Gastrocnemius medialis (tissue), 4 donors: ENCODE measurements at regions of chr19 and their contacts with region 1.

Region 1: GRCh38 chr19:12365236-12366162 is at the start of gene ZNF442:
- DNase-seq: peak; percentile 95 to 96
- ATAC-seq: peak; percentile 98 to 99
- H3K4me3 ChIP-seq: peak within 1 kb of the TSS; percentile 76 to 93 (median 84)
- H3K27ac ChIP-seq: peak within 1 kb of the TSS; percentile 86 to 97 (median 92)
- H3K4me1 ChIP-seq: peaks cover 6 to 11% of the 10 kb centered on the region in 2 donors
- H3K27me3 ChIP-seq: no peaks in the 10 kb centered on the region
- CTCF ChIP-seq: peak; percentile 49 to 75 (median 58)
- POLR2A ChIP-seq: peak; percentile 81 to 87
- total RNA-seq, gene ZNF442: 0.22 to 0.66 (median 0.42) TPM

Region 2: GRCh38 chr19:12035220-12036153 is 330.0 kb before region 1 on chr19 and contains the start of gene ZNF433:
- in situ Hi-C with region 1: no loop called
- intact Hi-C with region 1: loop called (anchors 10 kb)
- DNase-seq: peak; percentile 84 to 86
- ATAC-seq: peak; percentile 99
- H3K4me3 ChIP-seq: peak within 1 kb of the TSS; percentile 86 to 95 (median 90)
- H3K27ac ChIP-seq: peak within 1 kb of the TSS; percentile 87 to 92 (median 90)
- H3K4me1 ChIP-seq: peaks cover 8 to 10% of the 10 kb centered on the region in 2 donors
- H3K27me3 ChIP-seq: no peaks in the 10 kb centered on the region
- CTCF ChIP-seq: no peak
- POLR2A ChIP-seq: peak; percentile 52 to 58
- total RNA-seq, gene ZNF433: 3.6 to 8.2 (median 5.0) TPM

Region 3: GRCh38 chr19:12294249-12295158 is 71.0 kb before region 1 on chr19 and contains the start of gene ZNF44:
- in situ Hi-C with region 1: no loop called
- intact Hi-C with region 1: loop called (anchors 1 kb)
- DNase-seq: peak; percentile 97 to 99
- ATAC-seq: peak; percentile 99 to 100
- H3K4me3 ChIP-seq: peak within 1 kb of the TSS; percentile 72 to 92 (median 88)
- H3K27ac ChIP-seq: peak within 1 kb of the TSS; percentile 84 to 96 (median 93)
- H3K4me1 ChIP-seq: peaks cover 9 to 18% of the 10 kb centered on the region in 2 donors
- H3K27me3 ChIP-seq: no peaks in the 10 kb centered on the region
- CTCF ChIP-seq: peak in 1 of 5 experiments; percentile 11
- POLR2A ChIP-seq: peak; percentile 75 to 78
- total RNA-seq, gene ZNF44: 2.6 to 4.0 (median 3.5) TPM

Region 4: DNA sequence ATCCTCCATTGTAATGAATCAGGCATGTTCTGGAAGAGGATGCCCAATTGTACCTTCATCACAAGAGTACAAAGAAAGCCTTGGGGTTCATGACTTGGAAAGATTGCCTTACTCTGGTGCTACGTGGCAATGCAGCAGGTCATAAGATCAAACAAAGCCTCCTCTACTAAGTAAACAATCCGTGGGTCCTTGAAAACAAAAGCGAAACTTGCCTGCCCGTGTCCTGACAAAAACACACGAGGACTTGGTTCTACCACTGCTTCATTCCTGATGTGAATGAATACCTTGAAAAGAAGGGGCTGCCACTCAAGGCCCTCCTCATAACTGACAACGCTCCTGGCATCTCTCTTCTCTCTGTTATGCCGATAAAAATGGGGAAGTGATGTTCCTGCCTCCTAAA is 50.9 kb before region 1 on chr19:
- in situ Hi-C with region 1: no loop called
- intact Hi-C with region 1: no loop called
- DNase-seq: no peak
- ATAC-seq: no peak
- H3K4me3 ChIP-seq: no peak overlapping the region
- H3K27ac ChIP-seq: no peak overlapping the region
- H3K4me1 ChIP-seq: no peaks in the 10 kb centered on the region
- H3K27me3 ChIP-seq: no peaks in the 10 kb centered on the region
- CTCF ChIP-seq: no peak
- POLR2A ChIP-seq: no peak

Region 5: DNA sequence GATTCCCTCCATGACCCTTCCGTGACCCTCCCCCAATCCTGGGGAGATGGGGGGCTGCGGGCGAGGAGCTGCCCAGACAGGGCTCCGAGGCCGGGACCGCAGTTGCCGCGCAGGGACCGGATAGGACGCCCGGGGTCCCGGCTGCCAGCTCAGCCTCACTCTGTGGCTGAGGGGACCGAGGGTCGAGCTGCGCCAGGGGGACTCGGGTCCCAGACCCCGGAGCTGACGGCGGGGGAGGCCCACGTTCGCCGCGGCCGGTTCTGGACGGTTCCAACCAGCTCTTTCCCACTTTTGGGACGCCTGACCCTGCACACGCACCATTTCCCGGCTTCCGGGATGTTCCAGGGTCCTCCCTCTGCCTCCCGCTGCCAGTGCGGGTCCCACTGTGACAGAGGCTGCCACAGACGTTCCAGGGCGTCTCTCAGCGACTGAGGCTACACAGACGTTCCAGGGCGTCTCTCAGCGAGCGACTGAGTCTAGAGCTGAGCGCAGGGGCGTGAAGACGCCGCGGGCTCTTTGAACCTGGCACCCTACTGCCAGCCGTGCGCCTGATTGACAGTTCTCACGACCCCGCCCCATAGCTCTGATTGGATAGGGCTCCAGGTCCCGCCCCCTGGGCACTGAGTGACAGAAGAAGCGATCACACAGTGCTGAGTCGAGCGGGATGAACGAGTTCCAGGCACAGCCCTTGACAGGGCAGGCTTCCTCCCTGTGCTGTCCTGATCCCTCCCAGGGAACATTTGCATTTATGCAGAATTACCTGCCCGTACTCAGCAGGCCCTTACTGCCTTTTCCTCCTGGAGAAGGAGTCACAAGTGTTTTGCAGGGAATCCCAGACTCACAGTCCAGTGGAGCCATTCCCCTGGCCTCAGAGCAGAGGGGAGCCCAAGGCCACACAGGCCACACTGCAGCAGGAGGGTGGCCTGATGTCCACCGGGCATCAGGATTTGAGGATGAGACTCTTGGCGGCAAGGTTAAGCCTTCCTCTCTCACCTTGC is 32.0 kb before region 1 on chr19 and contains the start of gene ZNF563:
- in situ Hi-C with region 1: no loop called
- intact Hi-C with region 1: loop called (anchors 1 kb)
- DNase-seq: peak; percentile 93 to 96
- ATAC-seq: peak; percentile 99
- H3K4me3 ChIP-seq: peak within 1 kb of the TSS; percentile 86 to 100 (median 95)
- H3K27ac ChIP-seq: peak within 1 kb of the TSS; percentile 86 to 92 (median 88)
- H3K4me1 ChIP-seq: peaks cover 10 to 12% of the 10 kb centered on the region in 2 donors
- H3K27me3 ChIP-seq: no peaks in the 10 kb centered on the region
- CTCF ChIP-seq: no peak
- POLR2A ChIP-seq: peak; percentile 67 to 81
- total RNA-seq, gene ZNF563: 1.3 to 2.8 (median 2.2) TPM

Region 6: DNA sequence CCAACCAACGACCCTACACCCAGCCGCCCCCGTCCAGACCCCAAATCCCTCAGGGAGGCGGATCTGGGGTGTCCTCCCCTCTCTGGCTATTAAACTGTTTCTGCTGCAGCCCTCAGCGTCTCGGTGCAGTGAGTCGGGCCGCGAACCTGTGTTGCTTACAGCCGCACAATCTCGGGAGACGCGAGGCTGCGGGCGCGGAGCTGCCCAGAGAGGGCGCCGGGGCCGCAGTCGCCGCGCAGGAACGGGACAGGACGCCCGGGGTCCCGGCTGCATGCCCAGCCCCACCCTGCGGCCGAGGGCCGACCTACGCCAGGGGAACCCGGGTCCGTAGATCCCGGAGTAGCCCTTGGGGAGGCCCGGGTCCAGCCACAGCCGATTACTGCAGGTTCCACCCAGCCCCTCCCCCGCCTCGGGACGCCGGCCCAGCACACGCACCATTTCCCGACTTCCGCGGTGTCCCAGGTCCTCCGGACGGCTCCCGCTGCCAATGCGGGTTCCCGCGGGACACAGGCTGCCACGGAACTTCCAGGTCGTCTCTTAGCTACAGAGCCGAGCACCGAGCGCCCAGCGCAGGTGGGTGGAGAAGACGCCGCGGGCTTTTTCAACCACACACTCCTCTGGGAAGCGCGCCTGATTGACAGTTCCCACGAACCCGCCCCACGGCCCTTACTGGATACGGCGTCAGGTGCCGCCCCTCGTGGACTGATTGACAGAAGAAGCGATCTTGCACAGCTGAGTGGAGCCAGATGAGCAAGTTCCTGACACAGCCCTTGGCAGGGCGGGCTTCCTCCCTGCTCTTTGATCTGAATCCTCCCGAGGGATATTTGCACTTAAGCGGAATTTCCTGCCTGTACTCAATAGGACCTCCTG is 35.4 kb after region 1 on chr19 and contains the start of gene ZNF799:
- in situ Hi-C with region 1: no loop called
- intact Hi-C with region 1: loop called (anchors 2 kb)
- DNase-seq: peak; percentile 96
- ATAC-seq: peak; percentile 98 to 99
- H3K4me3 ChIP-seq: peak within 1 kb of the TSS; percentile 69 to 94 (median 80)
- H3K27ac ChIP-seq: peak within 1 kb of the TSS; percentile 83 to 95 (median 89)
- H3K4me1 ChIP-seq: peaks cover 5 to 6% of the 10 kb centered on the region in 2 donors
- H3K27me3 ChIP-seq: no peaks in the 10 kb centered on the region
- CTCF ChIP-seq: peak in 2 of 5 experiments; percentile 11 to 15
- POLR2A ChIP-seq: peak; percentile 49 to 57
- total RNA-seq, gene ZNF799: 1.3 to 3.6 (median 3.2) TPM

Region 7: DNA sequence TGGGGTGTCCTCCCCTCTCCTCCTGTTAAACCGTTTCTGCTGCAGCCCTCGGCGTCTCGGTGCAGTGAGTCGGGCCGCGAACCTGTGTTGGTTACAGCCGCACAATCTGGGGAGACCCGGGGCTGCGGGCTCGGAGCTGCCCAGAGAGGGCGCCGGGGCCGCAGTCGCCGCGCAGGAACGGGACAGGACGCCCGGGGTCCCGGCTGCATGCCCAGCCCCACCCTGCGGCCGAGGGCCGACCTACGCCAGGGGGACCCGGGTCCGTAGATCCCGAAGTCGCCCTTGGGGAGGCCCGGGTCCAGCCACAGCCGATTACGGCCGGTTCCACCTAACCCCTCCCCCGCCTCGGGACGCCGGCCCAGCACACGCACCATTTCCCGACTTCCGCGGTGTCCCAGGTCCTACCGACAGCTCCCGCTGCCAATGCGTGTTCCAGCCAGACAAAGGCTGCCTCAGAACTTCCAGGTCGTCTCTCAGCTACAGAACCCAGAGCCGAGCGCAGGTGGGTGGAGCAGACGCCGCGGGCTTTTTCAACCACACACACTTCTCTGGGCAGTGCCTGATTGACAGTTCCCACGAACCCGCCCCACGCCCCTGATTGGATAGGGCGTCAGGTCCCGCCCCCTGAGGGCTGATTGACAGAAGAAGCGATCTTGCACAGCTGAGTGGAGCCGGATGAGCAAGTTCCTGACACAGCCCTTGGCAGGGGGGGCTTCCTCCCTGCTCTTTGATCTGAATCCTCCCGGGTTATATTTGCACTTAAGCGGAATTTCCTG is 75.2 kb after region 1 on chr19 and contains the start of gene ZNF443:
- in situ Hi-C with region 1: no loop called
- intact Hi-C with region 1: loop called (anchors 2 kb)
- DNase-seq: peak; percentile 96 to 98
- ATAC-seq: peak; percentile 98 to 99
- H3K4me3 ChIP-seq: peak within 1 kb of the TSS; percentile 78 to 83 (median 80)
- H3K27ac ChIP-seq: peak within 1 kb of the TSS; percentile 81 to 89 (median 84)
- H3K4me1 ChIP-seq: peaks cover 0 to 9% of the 10 kb centered on the region in 2 donors
- H3K27me3 ChIP-seq: no peaks in the 10 kb centered on the region
- CTCF ChIP-seq: no peak
- POLR2A ChIP-seq: peak; percentile 45 to 57
- total RNA-seq, gene ZNF443: 0.95 to 2.3 (median 1.7) TPM

Region 8: GRCh38 chr19:12656899-12657571 is 291.5 kb after region 1 on chr19:
- in situ Hi-C with region 1: no loop called
- intact Hi-C with region 1: no loop called
- DNase-seq: no peak
- ATAC-seq: no peak
- H3K4me3 ChIP-seq: no peak overlapping the region
- H3K27ac ChIP-seq: no peak overlapping the region
- H3K4me1 ChIP-seq: no peaks in the 10 kb centered on the region
- H3K27me3 ChIP-seq: no peaks in the 10 kb centered on the region
- CTCF ChIP-seq: no peak
- POLR2A ChIP-seq: no peak

Region 9: DNA sequence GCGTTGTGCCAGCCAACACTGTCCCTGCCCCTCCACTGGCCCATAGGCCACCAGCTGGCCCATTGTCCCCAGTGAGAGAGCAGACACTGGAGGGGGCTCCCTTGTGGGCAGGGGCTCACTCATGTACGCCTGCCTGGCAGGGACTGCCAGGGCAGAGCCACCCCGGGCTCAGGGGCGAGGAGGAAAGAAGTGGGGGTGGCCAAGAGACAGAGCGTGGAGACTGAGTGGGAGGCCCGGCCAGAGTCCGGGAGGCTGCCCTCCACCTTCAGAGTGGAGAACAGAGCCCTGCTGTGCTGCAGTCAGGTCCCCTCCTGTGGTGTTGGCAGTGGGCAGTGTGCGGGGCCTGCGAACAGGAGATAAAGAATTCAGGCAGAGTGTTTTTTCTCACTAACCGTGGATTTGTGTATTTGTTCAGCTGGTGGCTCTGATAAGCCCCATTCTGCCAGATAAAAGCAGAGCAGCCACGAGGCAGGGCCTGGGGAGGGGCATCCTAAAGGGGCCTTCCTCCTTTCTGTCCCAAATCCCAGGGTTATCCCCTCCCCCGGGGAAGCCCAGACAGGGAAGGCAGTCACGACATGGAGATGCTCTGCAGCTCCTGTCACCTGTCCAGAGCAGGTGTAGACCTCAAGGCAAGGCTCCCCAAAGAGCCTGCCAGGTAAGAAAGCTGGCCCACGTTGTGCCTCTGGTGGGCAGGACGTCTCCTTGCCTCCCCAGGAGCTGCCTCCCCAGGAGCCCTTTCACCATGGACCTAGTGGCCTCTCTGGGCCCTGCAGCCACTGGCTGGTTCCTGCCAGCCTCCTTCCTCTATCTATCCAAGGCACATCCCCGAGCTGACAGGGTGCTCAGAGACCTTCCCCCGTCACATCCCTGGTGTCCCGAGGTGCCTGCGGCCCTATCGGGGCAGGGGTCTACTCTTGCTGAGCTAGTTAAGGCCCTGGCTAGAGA is 704.2 kb after region 1 on chr19:
- in situ Hi-C with region 1: no loop called
- intact Hi-C with region 1: no loop called
- DNase-seq: peak in 1 of 2 donors; percentile 55
- ATAC-seq: peak; percentile 13 to 40
- H3K4me3 ChIP-seq: peak overlapping the region; percentile 51 to 54 (median 52)
- H3K27ac ChIP-seq: peak overlapping the region; percentile 92 to 100 (median 96)
- H3K4me1 ChIP-seq: peaks cover 67 to 75% of the 10 kb centered on the region in 2 donors
- H3K27me3 ChIP-seq: no peaks in the 10 kb centered on the region
- CTCF ChIP-seq: peak in 1 of 5 experiments; percentile 30
- POLR2A ChIP-seq: no peak